ENCODE measurements at regions of chr3 and their contacts with region 1.

Region 1: DNA sequence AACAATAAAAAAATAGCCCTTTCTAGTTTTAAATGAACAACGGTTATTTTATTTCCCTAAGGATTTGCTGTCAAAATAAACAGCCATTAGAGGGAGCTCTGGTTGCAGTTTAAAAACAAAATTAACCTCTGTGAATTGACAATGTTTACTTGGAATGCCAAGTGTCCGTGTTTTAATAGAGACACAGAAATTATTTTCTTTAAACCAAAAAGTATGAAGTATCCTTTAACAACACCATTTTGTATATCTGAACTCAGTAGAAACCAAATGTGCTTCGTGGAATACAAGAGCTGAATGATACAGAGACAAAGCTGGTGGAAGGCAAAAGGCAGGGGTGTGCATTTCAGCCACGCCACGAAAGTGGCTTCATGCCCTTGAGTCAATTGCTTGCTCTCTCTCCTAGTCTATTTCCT is 74.4 kb downstream of the MOBP start:
- DNase-seq: peak; percentile 79
- H3K4me3 ChIP-seq: peak overlapping the region in 1 of 3 experiments; percentile 40
- H3K27ac ChIP-seq: peak overlapping the region; percentile 10
- H3K4me1 ChIP-seq: peaks cover 9% of the 10 kb centered on the region
- H3K27me3 ChIP-seq: no peaks in the 10 kb centered on the region
- CTCF ChIP-seq: peak; percentile 40 to 49
- POLR2A ChIP-seq: no peak

Region 2: DNA sequence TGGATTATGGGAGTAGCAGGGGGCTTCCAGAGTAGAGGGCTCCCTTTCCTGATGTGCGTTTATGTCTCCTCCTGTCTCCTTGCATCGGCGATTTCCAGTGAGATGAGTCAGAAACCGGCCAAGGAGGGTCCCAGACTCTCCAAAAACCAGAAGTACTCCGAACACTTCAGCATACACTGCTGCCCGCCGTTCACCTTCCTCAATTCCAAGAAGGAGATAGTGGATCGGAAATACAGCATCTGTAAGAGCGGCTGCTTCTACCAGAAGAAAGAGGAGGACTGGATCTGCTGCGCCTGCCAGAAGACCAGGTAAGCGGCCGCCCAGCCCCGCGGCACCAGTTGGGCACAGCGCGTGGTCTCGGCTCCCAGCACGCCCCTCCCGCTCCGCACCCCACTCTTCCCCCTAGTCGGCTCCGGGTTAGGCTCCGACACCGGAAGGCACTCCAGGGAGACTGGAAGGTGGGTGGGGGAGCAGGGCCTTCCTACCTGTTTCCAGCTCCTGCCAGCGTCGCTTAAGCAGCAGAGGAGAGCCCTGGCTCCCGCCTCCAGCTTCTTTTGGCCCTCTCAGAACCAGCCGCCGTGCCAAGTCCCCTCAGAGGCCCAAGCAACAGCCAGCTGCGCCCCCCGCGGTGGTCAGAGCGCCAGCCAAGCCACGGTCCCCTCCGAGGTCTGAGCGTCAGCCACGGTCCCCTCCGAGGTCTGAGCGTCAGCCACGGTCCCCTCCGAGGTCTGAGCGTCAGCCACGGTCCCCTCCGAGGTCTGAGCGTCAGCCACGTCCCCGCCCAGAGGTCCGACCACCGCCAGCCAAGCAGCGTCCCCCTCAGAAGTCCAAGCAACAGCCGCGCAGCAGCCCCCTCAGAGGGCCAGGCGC is 39.7 kb before region 1 on chr3:
- CTCF ChIA-PET with region 1: interaction called, 17 read pairs
- POLR2A ChIA-PET with region 1: no interaction called
- dilution Hi-C with region 1: no loop called
- intact Hi-C with region 1: no loop called
- DNase-seq: no peak
- H3K4me3 ChIP-seq: peak overlapping the region; percentile 49 to 64 (median 63)
- H3K27ac ChIP-seq: peak overlapping the region; percentile 46
- H3K4me1 ChIP-seq: peaks cover 23% of the 10 kb centered on the region
- H3K27me3 ChIP-seq: peaks cover 0 to 6% of the 10 kb centered on the region in 2 experiments
- CTCF ChIP-seq: no peak
- POLR2A ChIP-seq: no peak

Region 3: GRCh38 chr3:39668420-39668819 is 126.5 kb after region 1 on chr3:
- CTCF ChIA-PET with region 1: interaction called, 4 read pairs
- POLR2A ChIA-PET with region 1: no interaction called
- dilution Hi-C with region 1: no loop called
- intact Hi-C with region 1: loop called (anchors 1 kb)
- DNase-seq: peak; percentile 60
- H3K4me3 ChIP-seq: no peak overlapping the region
- H3K27ac ChIP-seq: no peak overlapping the region
- H3K4me1 ChIP-seq: no peaks in the 10 kb centered on the region
- H3K27me3 ChIP-seq: no peaks in the 10 kb centered on the region
- CTCF ChIP-seq: peak; percentile 67 to 71
- POLR2A ChIP-seq: no peak

Region 4: GRCh38 chr3:39724233-39724846 is 182.4 kb after region 1 on chr3:
- CTCF ChIA-PET with region 1: interaction called, 18 read pairs
- POLR2A ChIA-PET with region 1: no interaction called
- dilution Hi-C with region 1: no loop called
- intact Hi-C with region 1: no loop called
- DNase-seq: peak; percentile 58
- H3K4me3 ChIP-seq: no peak overlapping the region
- H3K27ac ChIP-seq: no peak overlapping the region
- H3K4me1 ChIP-seq: no peaks in the 10 kb centered on the region
- H3K27me3 ChIP-seq: no peaks in the 10 kb centered on the region
- CTCF ChIP-seq: peak; percentile 40 to 41
- POLR2A ChIP-seq: no peak

Region 5: GRCh38 chr3:40109641-40110490 is 567.9 kb after region 1 on chr3:
- CTCF ChIA-PET with region 1: no interaction called
- POLR2A ChIA-PET with region 1: no interaction called
- dilution Hi-C with region 1: no loop called
- intact Hi-C with region 1: loop called (anchors 2 kb)
- DNase-seq: peak; percentile 61
- H3K4me3 ChIP-seq: no peak overlapping the region
- H3K27ac ChIP-seq: no peak overlapping the region
- H3K4me1 ChIP-seq: no peaks in the 10 kb centered on the region
- H3K27me3 ChIP-seq: no peaks in the 10 kb centered on the region
- CTCF ChIP-seq: peak; percentile 28 to 64
- POLR2A ChIP-seq: no peak

Region 6: GRCh38 chr3:40191850-40192448 is 650.0 kb after region 1 on chr3:
- CTCF ChIA-PET with region 1: interaction called, 14 read pairs
- POLR2A ChIA-PET with region 1: no interaction called
- dilution Hi-C with region 1: no loop called
- intact Hi-C with region 1: no loop called
- DNase-seq: peak; percentile 63
- H3K4me3 ChIP-seq: no peak overlapping the region
- H3K27ac ChIP-seq: no peak overlapping the region
- H3K4me1 ChIP-seq: no peaks in the 10 kb centered on the region
- H3K27me3 ChIP-seq: no peaks in the 10 kb centered on the region
- CTCF ChIP-seq: peak; percentile 76 to 88
- POLR2A ChIP-seq: no peak

Measured in endothelial cell of umbilical vein (primary cell).